Adrenal gland (tissue), 19 donors: ENCODE measurements at regions of chr20 and their contacts with region 1.

Region 1: GRCh38 chr20:44866703-44867335 is 18.7 kb upstream of the YWHAB start:
- DNase-seq: no peak
- H3K4me3 ChIP-seq: peak overlapping the region in 1 of 4 donors; percentile 23
- H3K27ac ChIP-seq: no peak overlapping the region
- H3K4me1 ChIP-seq: peaks cover 0 to 16% of the 10 kb centered on the region in 2 donors
- H3K27me3 ChIP-seq: no peaks in the 10 kb centered on the region
- CTCF ChIP-seq: no peak
- POLR2A ChIP-seq: no peak

Region 2: GRCh38 chr20:44683263-44684046 is 183.4 kb before region 1 on chr20:
- intact Hi-C with region 1: loop called in 1 of 2 experiments (anchors 5 kb)
- DNase-seq: peak in 5 of 7 donors; percentile 56 to 75 (median 66)
- H3K4me3 ChIP-seq: no peak overlapping the region
- H3K27ac ChIP-seq: peak overlapping the region in 3 of 5 donors; percentile 37 to 83 (median 66)
- H3K4me1 ChIP-seq: peaks cover 5 to 7% of the 10 kb centered on the region in 2 donors
- H3K27me3 ChIP-seq: no peaks in the 10 kb centered on the region
- CTCF ChIP-seq: peak; percentile 33 to 71 (median 51)
- POLR2A ChIP-seq: no peak

Region 3: GRCh38 chr20:44747166-44748004 is 119.4 kb before region 1 on chr20:
- intact Hi-C with region 1: loop called (anchors 2 to 5 kb)
- DNase-seq: peak; percentile 72 to 94 (median 82)
- H3K4me3 ChIP-seq: no peak overlapping the region
- H3K27ac ChIP-seq: no peak overlapping the region
- H3K4me1 ChIP-seq: peaks cover 6 to 23% of the 10 kb centered on the region in 2 donors
- H3K27me3 ChIP-seq: peaks cover 11% of the 10 kb centered on the region
- CTCF ChIP-seq: peak; percentile 53 to 77 (median 67)
- POLR2A ChIP-seq: no peak